ENCODE measurements at regions of chr1 and their contacts with region 1.

Region 1: GRCh38 chr1:228457396-228458176 is 29.6 kb upstream of the RNF187 start:
- DNase-seq: peak; percentile 98
- H3K4me3 ChIP-seq: peak overlapping the region; percentile 69 to 78 (median 76)
- H3K27ac ChIP-seq: peak overlapping the region; percentile 59
- H3K4me1 ChIP-seq: peaks cover 30% of the 10 kb centered on the region
- H3K27me3 ChIP-seq: no peaks in the 10 kb centered on the region
- CTCF ChIP-seq: peak in 1 of 2 donors; percentile 48

Region 2: GRCh38 chr1:228340686-228341449 is 116.7 kb before region 1 on chr1:
- CTCF ChIA-PET with region 1: no interaction called
- dilution Hi-C with region 1: no loop called
- in situ Hi-C with region 1: no loop called
- intact Hi-C with region 1: no loop called
- DNase-seq: no peak
- H3K4me3 ChIP-seq: no peak overlapping the region
- H3K27ac ChIP-seq: no peak overlapping the region
- H3K4me1 ChIP-seq: no peaks in the 10 kb centered on the region
- H3K27me3 ChIP-seq: no peaks in the 10 kb centered on the region
- CTCF ChIP-seq: peak in 1 of 2 donors; percentile 38

Region 3: DNA sequence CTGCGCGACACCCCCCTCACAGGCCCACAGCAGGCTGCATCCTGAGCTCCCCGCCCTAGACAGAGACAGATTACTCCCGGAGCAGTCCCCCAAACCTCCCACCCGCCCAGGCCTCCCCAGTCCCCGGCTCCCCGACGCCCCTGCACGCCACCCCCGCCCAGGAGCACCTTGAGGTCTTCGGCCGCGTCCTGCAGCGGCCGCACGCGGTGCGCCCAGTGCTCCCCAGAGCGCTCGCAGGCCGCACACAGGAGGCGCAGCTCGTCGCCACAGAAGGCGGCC is 51.7 kb before region 1 on chr1:
- CTCF ChIA-PET with region 1: no interaction called
- dilution Hi-C with region 1: no loop called
- in situ Hi-C with region 1: loop called in 1 of 2 experiments (anchors 10 kb)
- intact Hi-C with region 1: loop called (anchors 2 kb)
- DNase-seq: no peak
- H3K4me3 ChIP-seq: peak overlapping the region; percentile 69 to 94 (median 76)
- H3K27ac ChIP-seq: peak overlapping the region; percentile 16
- H3K4me1 ChIP-seq: peaks cover 28% of the 10 kb centered on the region
- H3K27me3 ChIP-seq: no peaks in the 10 kb centered on the region
- CTCF ChIP-seq: no peak

Region 4: GRCh38 chr1:228417822-228418203 is 39.8 kb before region 1 on chr1:
- CTCF ChIA-PET with region 1: interaction called, 5 read pairs
- dilution Hi-C with region 1: no loop called
- in situ Hi-C with region 1: no loop called
- intact Hi-C with region 1: loop called (anchors 1 kb)
- DNase-seq: peak; percentile 83
- H3K4me3 ChIP-seq: no peak overlapping the region
- H3K27ac ChIP-seq: peak overlapping the region; percentile 16
- H3K4me1 ChIP-seq: peaks cover 23% of the 10 kb centered on the region
- H3K27me3 ChIP-seq: no peaks in the 10 kb centered on the region
- CTCF ChIP-seq: no peak

Region 5: GRCh38 chr1:228438275-228438674 is 19.3 kb before region 1 on chr1:
- CTCF ChIA-PET with region 1: interaction called, 20 read pairs
- dilution Hi-C with region 1: no loop called
- in situ Hi-C with region 1: no loop called
- intact Hi-C with region 1: no loop called
- DNase-seq: no peak
- H3K4me3 ChIP-seq: no peak overlapping the region
- H3K27ac ChIP-seq: no peak overlapping the region
- H3K4me1 ChIP-seq: no peaks in the 10 kb centered on the region
- H3K27me3 ChIP-seq: no peaks in the 10 kb centered on the region
- CTCF ChIP-seq: no peak